A673 (cell line): ENCODE measurements at regions of chr5 and their contacts with region 1.

Region 1: DNA sequence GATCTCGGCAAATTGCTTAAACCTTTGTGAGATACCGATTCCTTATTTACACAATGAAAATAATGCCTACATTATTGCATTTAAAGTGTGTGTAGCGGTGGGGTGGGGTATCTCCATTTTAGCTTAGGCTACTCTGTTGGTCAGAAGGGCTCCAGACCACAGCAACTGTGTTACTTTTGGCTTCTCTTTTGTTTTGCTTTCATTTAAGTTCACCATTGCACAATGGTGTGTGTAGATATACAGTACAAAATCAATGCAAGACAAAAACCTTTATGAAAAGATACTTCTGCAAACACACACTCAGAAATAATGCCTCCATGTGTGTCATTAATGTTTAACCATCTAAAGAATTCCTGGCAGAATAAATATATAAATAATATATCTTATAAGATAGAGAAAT is 279.4 kb downstream of the FBXL17 start:
- DNase-seq: no peak
- H3K4me3 ChIP-seq: no peak overlapping the region
- H3K27ac ChIP-seq: no peak overlapping the region
- H3K4me1 ChIP-seq: no peaks in the 10 kb centered on the region
- H3K27me3 ChIP-seq: no peaks in the 10 kb centered on the region
- CTCF ChIP-seq: no peak

Region 2: DNA sequence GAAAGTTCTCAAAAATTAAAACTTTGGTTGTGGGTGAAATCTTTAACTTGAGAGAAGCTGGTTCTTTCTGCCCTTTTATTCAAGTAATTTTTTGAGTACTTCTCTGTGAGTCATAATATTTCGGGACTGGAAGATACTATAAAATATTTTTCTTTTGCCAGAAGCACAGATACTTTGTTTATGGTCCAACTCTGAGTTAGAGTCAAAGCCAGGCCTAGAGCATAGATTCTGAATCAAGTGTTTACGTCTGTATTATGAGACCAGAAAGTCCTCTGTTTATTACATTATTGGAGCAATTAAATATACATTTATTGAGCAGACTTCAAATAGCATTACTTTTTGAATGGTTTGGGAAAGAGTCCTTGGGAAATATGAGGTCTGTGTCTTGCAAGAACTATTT is 833.1 kb after region 1 on chr5:
- CTCF ChIA-PET with region 1: no interaction called
- POLR2A ChIA-PET with region 1: interaction called, 10 read pairs
- intact Hi-C with region 1: no loop called
- DNase-seq: no peak
- H3K4me3 ChIP-seq: no peak overlapping the region
- H3K27ac ChIP-seq: no peak overlapping the region
- H3K4me1 ChIP-seq: no peaks in the 10 kb centered on the region
- H3K27me3 ChIP-seq: no peaks in the 10 kb centered on the region
- CTCF ChIP-seq: no peak